ENCODE measurements at regions of chr9 and their contacts with region 1.

Region 1: DNA sequence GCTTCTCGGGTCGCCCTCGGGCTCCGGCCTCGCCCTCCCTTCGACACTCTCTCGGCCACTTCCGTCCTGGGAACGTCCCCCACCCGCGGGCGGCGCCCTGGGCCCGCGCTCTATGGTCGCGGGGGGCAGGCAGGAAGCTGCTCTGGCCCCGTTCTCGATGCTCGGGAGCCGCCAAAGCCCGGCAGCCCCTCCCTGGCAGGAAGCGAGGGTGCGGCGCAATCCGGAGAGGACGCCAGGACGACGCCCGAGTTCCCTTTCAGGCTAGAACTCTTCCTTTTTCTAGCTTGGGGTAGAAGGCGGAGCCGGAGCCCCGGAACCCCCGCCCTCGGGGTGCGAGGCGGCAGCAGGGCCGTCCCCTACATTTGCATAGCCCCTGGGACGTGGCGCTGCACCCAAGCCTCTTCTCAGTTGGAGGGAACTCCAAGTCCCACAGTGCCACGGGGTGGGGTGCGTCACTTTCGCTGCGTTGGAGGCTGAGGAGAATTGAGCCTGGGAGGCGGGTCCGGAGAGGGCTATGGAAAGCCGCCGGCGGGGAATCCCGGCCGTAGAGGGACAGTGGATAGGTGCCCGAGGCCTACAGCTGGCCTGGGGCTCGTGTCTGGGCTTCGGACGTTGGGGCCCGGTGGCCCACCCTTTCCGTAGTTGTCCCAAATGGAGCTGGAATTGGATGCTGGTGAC is at the starts of genes CREB3 and TLN1:
- DNase-seq: peak; percentile 100
- H3K27ac ChIP-seq: peak within 1 kb of the TSS; percentile 95
- CTCF ChIP-seq: peak; percentile 70

Region 2: DNA sequence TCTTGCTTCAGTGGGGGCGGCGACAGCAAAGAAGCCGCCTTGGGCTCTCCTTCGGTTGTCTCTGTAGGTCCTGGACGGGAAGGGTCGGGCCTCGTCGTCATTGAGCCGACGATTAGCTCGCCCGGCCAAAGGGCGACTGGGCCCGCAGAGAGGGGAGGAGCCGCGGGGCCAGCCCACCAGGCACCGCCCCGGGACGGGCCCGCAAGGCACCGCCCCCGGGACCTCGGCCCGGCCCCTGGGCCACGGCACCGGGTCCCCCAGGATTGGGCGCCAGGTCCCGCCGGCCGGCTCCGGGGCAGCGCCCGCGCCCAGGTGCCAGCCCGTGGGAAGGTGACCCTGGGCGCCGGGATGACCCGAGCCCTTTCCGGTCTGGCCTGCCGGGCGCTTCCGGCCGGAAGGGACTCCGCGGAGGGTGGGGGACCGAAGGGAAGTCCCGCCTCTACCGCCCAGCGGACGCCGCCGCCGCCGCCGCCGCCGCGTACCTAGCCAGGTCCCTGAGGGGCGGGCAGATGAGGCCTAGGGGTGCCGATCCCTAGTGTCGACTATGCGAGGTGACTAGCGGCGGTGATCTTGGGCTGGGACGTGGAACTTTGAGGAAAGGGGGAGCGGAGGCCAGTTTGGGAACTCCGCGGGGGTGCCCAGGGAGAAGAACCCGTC is 16.7 kb after region 1 on chr9 and contains the starts of genes GBA2 and RGP1:
- CTCF ChIA-PET with region 1: interaction called, 10 read pairs
- POLR2A ChIA-PET with region 1: interaction called, 13 read pairs
- DNase-seq: peak; percentile 78
- H3K27ac ChIP-seq: peak within 1 kb of the TSS; percentile 88
- CTCF ChIP-seq: no peak

Region 3: GRCh38 chr9:36029765-36030528 is 297.7 kb after region 1 on chr9:
- CTCF ChIA-PET with region 1: no interaction called
- POLR2A ChIA-PET with region 1: no interaction called
- DNase-seq: peak; percentile 77
- H3K27ac ChIP-seq: no peak overlapping the region
- CTCF ChIP-seq: no peak

Measured in RWPE1 (cell line).